ENCODE measurements at regions of chr4 and their contacts with region 1.

Region 1: GRCh38 chr4:39062094-39062769 is at the start of gene KLHL5:
- DNase-seq: no peak
- H3K4me3 ChIP-seq: no peak within 1 kb of the TSS
- H3K27ac ChIP-seq: no peak within 1 kb of the TSS
- H3K4me1 ChIP-seq: no peaks in the 10 kb centered on the region
- CTCF ChIP-seq: no peak
- total RNA-seq, gene KLHL5: 34.4 and 47.5 TPM in 2 replicates

Region 2: GRCh38 chr4:37847311-37847884 is 1214.8 kb before region 1 on chr4:
- CTCF ChIA-PET with region 1: no interaction called
- POLR2A ChIA-PET with region 1: no interaction called
- intact Hi-C with region 1: no loop called
- DNase-seq: no peak
- H3K4me3 ChIP-seq: peak overlapping the region; percentile 36
- H3K27ac ChIP-seq: peak overlapping the region; percentile 93
- H3K4me1 ChIP-seq: peaks cover 76% of the 10 kb centered on the region
- CTCF ChIP-seq: no peak

Region 3: DNA sequence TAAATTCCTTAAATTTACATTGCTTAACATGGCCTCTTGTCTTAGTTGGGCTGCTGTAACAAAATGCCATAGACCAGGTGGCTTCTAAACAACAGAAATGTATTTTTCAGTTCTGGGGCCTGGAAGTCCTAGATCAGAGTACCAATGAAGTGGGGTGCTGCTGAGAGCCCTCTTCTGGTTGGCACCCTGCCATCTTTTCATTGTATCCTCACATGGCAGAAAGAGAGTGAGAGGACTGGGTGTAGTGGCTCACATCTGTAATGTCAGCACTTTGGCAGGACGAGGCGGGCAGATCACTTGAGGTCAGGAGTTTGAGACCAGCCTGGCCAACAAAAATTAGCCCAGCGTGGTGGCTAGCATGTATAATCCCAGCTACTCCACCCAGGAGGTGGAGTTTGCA is 332.5 kb after region 1 on chr4:
- CTCF ChIA-PET with region 1: interaction called, 10 read pairs
- POLR2A ChIA-PET with region 1: interaction called, 4 read pairs
- intact Hi-C with region 1: no loop called
- DNase-seq: no peak
- H3K4me3 ChIP-seq: no peak overlapping the region
- H3K27ac ChIP-seq: no peak overlapping the region
- H3K4me1 ChIP-seq: no peaks in the 10 kb centered on the region
- CTCF ChIP-seq: no peak

Region 4: GRCh38 chr4:39713691-39714090 is 651.5 kb after region 1 on chr4:
- CTCF ChIA-PET with region 1: no interaction called
- POLR2A ChIA-PET with region 1: no interaction called
- intact Hi-C with region 1: no loop called
- DNase-seq: peak; percentile 21
- H3K4me3 ChIP-seq: peak overlapping the region; percentile 6
- H3K27ac ChIP-seq: peak overlapping the region; percentile 15
- H3K4me1 ChIP-seq: peaks cover 16% of the 10 kb centered on the region
- CTCF ChIP-seq: no peak

Region 5: GRCh38 chr4:40238700-40239548 is 1176.7 kb after region 1 on chr4:
- CTCF ChIA-PET with region 1: no interaction called
- POLR2A ChIA-PET with region 1: no interaction called
- intact Hi-C with region 1: no loop called
- DNase-seq: no peak
- H3K4me3 ChIP-seq: no peak overlapping the region
- H3K27ac ChIP-seq: no peak overlapping the region
- H3K4me1 ChIP-seq: no peaks in the 10 kb centered on the region
- CTCF ChIP-seq: no peak